ENCODE measurements at regions of chr12 and their contacts with region 1.

Region 1: DNA sequence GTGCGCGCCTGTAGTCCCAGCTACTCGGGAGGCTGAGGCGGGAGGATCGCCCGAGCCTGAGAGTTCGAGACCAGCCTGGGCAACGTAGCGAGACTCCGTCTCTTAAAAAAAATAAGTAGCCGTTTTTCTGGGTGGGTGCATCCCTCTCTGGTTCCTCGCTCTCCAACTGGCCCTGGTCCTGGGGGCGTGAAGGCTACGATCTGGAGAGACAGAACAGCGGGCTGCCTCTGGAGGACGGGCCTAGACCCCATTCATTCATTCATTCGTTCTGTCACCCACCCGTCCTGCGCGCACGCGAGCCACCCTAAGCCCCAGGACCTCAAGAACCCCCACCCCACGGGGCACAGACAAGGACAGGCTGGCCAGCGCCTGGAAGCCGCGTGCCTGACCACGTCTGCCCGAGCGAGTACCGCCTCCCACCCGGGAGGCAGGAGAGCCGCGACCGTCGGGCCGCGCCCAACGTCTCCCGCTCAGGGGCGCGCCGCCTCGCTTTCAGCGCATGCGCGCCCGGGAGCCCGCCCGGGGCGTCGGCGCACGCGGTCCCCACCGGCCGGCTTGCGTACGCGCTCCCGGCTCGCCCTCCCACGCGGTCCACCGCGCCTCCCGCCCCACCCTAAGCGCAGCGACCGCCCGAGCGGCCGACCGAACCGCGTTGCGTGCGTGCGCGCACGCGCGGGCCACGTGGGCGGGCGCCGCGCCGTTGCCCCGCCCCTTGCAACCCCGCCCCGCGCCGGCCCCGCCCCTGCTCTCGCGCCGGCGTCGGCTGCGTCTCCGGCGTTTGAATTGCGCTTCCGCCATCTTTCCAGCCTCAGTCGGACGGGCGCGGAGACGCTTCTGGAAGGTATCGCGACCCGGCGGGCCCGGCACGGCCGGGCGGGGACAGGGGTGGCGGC is at the start of gene RAN:
- DNase-seq: peak; percentile 96
- ATAC-seq: peak; percentile 73
- H3K4me3 Mint-ChIP-seq: peak within 1 kb of the TSS; percentile 99
- H3K27ac Mint-ChIP-seq: peak within 1 kb of the TSS; percentile 100
- H3K4me1 Mint-ChIP-seq: peaks cover 56% of the 10 kb centered on the region
- H3K27me3 Mint-ChIP-seq: no peaks in the 10 kb centered on the region
- total RNA-seq, gene RAN: 1,919 to 2,242 TPM

Region 2: DNA sequence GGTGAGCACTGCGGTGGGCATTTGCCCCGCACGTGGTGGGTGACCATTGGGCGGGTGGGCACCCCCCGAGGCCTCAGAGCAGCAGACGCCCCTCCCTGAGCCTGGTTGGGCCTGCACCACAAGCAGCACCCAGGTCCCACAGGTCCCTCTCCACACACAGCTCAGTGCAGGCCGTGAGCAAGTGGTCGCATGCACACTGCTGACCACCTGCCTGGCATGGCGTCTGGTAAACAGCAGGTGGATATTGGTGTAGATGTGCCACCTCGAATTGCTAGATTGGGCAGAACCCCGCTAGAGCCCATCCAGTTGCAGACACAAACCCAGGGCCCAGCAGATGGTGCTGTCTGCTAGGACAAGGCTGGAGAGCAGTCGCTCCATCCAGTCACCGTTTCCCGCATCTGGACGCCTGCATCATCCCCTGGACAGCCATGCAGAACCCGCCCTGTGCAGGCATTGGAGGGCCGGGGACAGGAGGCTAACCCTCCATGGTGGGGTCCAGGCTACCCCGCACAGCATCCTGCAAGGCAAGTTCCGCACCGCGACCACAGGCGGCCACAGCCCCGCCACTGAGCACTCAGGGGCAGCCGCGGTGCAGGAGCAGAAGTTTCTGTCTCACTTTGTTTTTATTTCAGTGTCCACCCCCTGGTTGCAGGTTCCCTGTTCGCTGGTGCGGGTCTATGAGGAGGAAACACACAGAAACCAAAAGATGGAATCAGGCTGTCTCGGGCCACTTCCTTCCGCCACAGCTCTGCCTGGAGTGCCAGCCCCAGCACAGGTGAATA is 109.8 kb before region 1 on chr12:
- CTCF ChIA-PET with region 1: no interaction called
- POLR2A ChIA-PET with region 1: no interaction called
- intact Hi-C with region 1: loop called (anchors 1 to 5 kb)
- DNase-seq: peak; percentile 84
- ATAC-seq: peak; percentile 68
- H3K4me3 Mint-ChIP-seq: peak overlapping the region; percentile 39
- H3K27ac Mint-ChIP-seq: no peak overlapping the region
- H3K4me1 Mint-ChIP-seq: peaks cover 4% of the 10 kb centered on the region
- H3K27me3 Mint-ChIP-seq: peaks cover 11% of the 10 kb centered on the region

Region 3: GRCh38 chr12:130838951-130839769 is 32.4 kb before region 1 on chr12 and contains the start of gene STX2:
- CTCF ChIA-PET with region 1: interaction called, 9 read pairs
- POLR2A ChIA-PET with region 1: interaction called, 3 read pairs
- intact Hi-C with region 1: loop called (anchors 1 to 2 kb)
- DNase-seq: peak; percentile 94
- ATAC-seq: peak; percentile 89
- H3K4me3 Mint-ChIP-seq: peak within 1 kb of the TSS; percentile 80
- H3K27ac Mint-ChIP-seq: peak within 1 kb of the TSS; percentile 76
- H3K4me1 Mint-ChIP-seq: peaks cover 32% of the 10 kb centered on the region
- H3K27me3 Mint-ChIP-seq: no peaks in the 10 kb centered on the region
- total RNA-seq, gene STX2: 13.1 to 16.2 TPM

Region 4: DNA sequence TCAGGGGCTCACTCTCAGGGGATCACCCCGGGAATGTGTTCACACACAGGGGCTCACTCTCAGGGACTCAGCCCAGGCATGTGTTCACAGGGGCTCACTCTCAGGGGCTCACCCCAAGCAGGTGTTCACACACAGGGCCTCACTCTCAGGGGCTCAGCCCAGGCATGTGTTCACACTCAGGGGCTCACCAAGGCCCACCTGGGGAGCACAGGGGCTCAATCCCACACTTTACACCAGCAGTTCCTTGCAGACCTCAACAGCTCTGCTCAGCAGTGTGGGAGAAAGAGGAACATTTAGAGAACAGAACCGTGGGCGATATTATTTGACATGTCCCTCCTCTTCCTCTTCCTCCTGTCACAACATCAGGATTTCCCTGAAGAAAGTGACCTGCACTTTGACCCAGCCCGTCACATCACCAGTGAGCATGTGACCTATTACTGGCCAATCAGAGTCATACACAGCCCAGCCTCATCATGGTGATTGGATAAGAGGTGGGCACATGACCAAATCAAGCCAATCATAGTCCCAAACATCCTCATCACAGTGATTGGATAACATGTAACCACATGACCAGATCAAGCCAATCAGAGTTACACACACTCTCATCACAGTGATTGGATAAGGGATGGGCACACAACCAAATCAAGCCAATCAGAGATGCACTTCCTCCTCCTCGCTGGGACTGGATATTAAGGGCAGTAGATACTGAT is 479.9 kb after region 1 on chr12:
- CTCF ChIA-PET with region 1: no interaction called
- POLR2A ChIA-PET with region 1: no interaction called
- intact Hi-C with region 1: no loop called
- DNase-seq: peak; percentile 12
- ATAC-seq: peak; percentile 81
- H3K4me3 Mint-ChIP-seq: no peak overlapping the region
- H3K27ac Mint-ChIP-seq: no peak overlapping the region
- H3K4me1 Mint-ChIP-seq: no peaks in the 10 kb centered on the region
- H3K27me3 Mint-ChIP-seq: peaks cover 18% of the 10 kb centered on the region

Region 5: DNA sequence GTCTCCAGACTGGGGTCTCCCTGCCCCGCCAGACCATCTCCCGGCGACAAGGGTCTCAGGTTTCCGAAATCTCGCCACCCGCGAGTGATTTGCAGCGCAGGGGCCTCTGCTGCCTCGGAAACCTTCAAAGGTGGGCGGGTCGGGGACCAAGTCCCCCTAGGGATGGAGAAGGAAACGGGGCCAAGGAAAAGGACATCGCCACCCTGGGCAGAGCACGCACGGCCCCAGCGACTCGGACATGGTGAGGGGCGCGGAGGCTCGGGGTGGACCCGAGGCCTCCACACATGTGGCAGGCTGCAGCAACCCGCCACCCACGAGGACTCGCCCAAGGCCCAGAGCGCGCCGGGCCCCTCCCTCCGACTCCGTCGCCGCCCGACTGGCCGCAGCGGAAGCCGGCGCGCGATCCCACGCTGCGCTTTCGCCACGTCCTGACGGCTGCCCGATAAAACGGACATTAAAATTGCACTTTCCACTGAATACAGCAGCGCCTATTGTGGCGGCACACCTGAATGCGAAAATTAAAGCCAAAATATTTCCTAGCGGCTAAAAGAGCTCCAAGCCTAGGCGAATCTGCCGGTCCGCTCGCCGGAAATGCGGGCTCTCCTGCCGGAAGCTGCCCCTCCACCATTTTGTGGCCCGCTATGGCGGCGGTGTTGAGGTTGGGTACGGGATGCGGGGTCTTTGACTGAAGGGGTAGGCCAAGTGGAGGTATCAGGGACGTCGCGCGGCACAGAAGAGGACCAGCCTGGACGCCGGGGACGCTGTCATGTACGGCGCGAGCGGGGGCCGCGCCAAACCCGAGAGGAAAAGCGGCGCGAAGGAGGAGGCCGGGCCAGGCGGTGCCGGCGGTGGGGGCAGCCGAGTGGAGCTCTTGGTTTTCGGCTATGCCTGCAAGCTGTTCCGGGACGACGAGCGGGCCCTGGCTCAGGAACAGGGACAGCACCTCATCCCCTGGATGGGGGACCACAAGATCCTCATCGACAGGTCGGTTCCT is 839.2 kb after region 1 on chr12 and contains the start of gene SFSWAP:
- CTCF ChIA-PET with region 1: interaction called, 3 read pairs
- POLR2A ChIA-PET with region 1: no interaction called
- intact Hi-C with region 1: loop called in 1 of 2 experiments (anchors 5 kb)
- DNase-seq: peak; percentile 85
- ATAC-seq: peak; percentile 92
- H3K4me3 Mint-ChIP-seq: peak within 1 kb of the TSS; percentile 98
- H3K27ac Mint-ChIP-seq: peak within 1 kb of the TSS; percentile 97
- H3K4me1 Mint-ChIP-seq: peaks cover 24% of the 10 kb centered on the region
- H3K27me3 Mint-ChIP-seq: no peaks in the 10 kb centered on the region
- total RNA-seq, gene SFSWAP: 47.9 to 73.1 TPM

Region 6: DNA sequence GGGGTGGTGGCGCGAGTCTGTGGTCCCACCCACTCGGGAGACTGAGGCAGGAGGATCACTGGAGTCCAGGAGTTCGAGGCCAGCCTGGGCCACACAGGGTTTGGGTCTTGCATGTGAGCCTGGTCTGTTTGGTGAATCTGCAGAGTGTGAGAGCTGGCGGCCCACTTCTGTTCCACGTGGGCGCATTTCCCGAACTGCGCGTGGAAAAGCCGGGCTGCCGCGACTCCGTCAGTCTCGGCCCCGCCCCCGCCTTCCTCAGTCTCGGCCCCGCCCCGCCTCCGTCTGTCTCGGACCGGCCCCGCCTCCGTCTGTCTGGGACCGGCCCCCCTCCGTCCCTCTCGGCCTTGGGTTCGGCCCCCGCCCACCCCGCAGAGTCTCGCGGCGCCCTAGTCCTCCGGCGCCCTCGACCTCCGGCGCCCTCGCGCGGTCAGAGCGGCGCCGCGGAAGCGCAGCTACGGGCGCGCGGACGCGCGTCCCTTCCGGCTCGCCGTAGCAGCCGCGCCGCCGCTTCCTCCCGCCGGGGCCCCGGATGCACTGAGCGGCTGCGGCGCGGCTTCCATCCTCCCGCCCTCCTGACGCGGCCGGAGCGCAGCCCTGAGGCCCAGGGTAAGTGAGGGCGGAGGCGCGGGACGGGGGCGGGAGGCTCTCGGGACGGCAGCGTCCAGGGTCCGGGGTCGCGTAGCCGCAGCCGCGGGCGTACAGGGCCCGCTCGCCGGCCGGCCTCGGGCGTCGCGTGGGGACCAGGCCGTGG is 1078.1 kb after region 1 on chr12 and contains the start of gene EP400:
- CTCF ChIA-PET with region 1: interaction called, 3 read pairs
- POLR2A ChIA-PET with region 1: no interaction called
- intact Hi-C with region 1: loop called in 1 of 2 experiments (anchors 1 kb)
- DNase-seq: peak; percentile 97
- ATAC-seq: peak; percentile 96
- H3K4me3 Mint-ChIP-seq: peak within 1 kb of the TSS; percentile 88
- H3K27ac Mint-ChIP-seq: peak within 1 kb of the TSS; percentile 93
- H3K4me1 Mint-ChIP-seq: peaks cover 42% of the 10 kb centered on the region
- H3K27me3 Mint-ChIP-seq: no peaks in the 10 kb centered on the region
- total RNA-seq, gene EP400: 46.4 to 51.3 TPM

Region 7: DNA sequence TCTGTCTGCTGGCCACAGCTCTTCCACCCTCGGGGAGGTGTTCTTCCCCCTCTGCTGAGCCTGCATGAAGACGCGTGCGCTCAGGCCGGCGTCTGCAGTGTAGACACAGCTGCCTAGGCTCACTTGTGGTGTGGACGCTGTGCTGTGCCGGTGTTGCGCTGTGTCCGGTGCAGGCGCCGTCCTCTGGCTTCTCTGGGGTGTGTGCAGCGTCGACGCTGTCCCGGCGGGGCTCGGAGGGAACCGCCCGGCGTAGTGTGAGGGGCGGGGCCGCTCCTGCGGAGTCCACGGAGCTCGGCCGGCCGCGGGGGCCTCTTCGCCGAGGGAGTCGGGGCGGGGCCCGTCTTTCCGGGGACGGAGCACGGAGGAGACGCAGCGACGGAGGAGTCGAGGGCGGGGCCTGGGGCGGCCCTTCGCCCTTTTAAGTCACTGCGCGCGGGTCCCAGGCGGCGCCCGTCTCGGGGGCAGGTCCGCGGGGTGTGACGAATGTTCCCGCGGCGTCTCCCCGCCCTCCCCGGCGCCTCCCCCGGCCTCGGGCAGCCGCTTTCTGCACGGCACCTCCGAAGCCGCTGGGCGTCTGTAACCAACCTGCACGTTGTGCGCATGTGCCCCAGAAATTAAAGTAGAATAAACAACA is 1318.0 kb after region 1 on chr12:
- CTCF ChIA-PET with region 1: no interaction called
- POLR2A ChIA-PET with region 1: no interaction called
- intact Hi-C with region 1: loop called in 1 of 2 experiments (anchors 5 kb)
- DNase-seq: peak; percentile 97
- ATAC-seq: peak; percentile 95
- H3K4me3 Mint-ChIP-seq: peak overlapping the region; percentile 78
- H3K27ac Mint-ChIP-seq: peak overlapping the region; percentile 79
- H3K4me1 Mint-ChIP-seq: peaks cover 28% of the 10 kb centered on the region
- H3K27me3 Mint-ChIP-seq: no peaks in the 10 kb centered on the region

Measured in activated CD4-positive, alpha-beta T cell treated with anti-CD3 and anti-CD28 coated beads for 36 hours (primary cell).